Activated naive CD4-positive, alpha-beta T cell treated with anti-CD3 and anti-CD28 coated beads for 36 hours (primary cell): ENCODE measurements at regions of chr3 and their contacts with region 1.

Region 1: GRCh38 chr3:30332196-30333021 is 274.0 kb upstream of the TGFBR2 start:
- DNase-seq: peak; percentile 58
- H3K4me3 Mint-ChIP-seq: peak overlapping the region; percentile 65
- H3K27ac Mint-ChIP-seq: peak overlapping the region; percentile 75
- H3K4me1 Mint-ChIP-seq: peaks cover 33% of the 10 kb centered on the region
- H3K27me3 Mint-ChIP-seq: no peaks in the 10 kb centered on the region

Region 2: GRCh38 chr3:30302027-30302426 is 30.4 kb before region 1 on chr3:
- CTCF ChIA-PET with region 1: no interaction called
- intact Hi-C with region 1: loop called (anchors 1 kb)
- DNase-seq: peak; percentile 18
- H3K4me3 Mint-ChIP-seq: no peak overlapping the region
- H3K27ac Mint-ChIP-seq: no peak overlapping the region
- H3K4me1 Mint-ChIP-seq: peaks cover 15% of the 10 kb centered on the region
- H3K27me3 Mint-ChIP-seq: peaks cover 2% of the 10 kb centered on the region

Region 3: GRCh38 chr3:30319713-30320112 is 12.7 kb before region 1 on chr3:
- CTCF ChIA-PET with region 1: interaction called, 14 read pairs
- intact Hi-C with region 1: no loop called
- DNase-seq: peak; percentile 67
- H3K4me3 Mint-ChIP-seq: no peak overlapping the region
- H3K27ac Mint-ChIP-seq: peak overlapping the region; percentile 26
- H3K4me1 Mint-ChIP-seq: peaks cover 21% of the 10 kb centered on the region
- H3K27me3 Mint-ChIP-seq: no peaks in the 10 kb centered on the region

Region 4: GRCh38 chr3:30342319-30343060 is 10.1 kb after region 1 on chr3:
- CTCF ChIA-PET with region 1: interaction called, 3 read pairs
- intact Hi-C with region 1: loop called (anchors 1 kb)
- DNase-seq: peak; percentile 59
- H3K4me3 Mint-ChIP-seq: no peak overlapping the region
- H3K27ac Mint-ChIP-seq: no peak overlapping the region
- H3K4me1 Mint-ChIP-seq: peaks cover 64% of the 10 kb centered on the region
- H3K27me3 Mint-ChIP-seq: no peaks in the 10 kb centered on the region